Ascending aorta (tissue), 2 donors: ENCODE measurements at regions of chr19 and their contacts with region 1.

Region 1: DNA sequence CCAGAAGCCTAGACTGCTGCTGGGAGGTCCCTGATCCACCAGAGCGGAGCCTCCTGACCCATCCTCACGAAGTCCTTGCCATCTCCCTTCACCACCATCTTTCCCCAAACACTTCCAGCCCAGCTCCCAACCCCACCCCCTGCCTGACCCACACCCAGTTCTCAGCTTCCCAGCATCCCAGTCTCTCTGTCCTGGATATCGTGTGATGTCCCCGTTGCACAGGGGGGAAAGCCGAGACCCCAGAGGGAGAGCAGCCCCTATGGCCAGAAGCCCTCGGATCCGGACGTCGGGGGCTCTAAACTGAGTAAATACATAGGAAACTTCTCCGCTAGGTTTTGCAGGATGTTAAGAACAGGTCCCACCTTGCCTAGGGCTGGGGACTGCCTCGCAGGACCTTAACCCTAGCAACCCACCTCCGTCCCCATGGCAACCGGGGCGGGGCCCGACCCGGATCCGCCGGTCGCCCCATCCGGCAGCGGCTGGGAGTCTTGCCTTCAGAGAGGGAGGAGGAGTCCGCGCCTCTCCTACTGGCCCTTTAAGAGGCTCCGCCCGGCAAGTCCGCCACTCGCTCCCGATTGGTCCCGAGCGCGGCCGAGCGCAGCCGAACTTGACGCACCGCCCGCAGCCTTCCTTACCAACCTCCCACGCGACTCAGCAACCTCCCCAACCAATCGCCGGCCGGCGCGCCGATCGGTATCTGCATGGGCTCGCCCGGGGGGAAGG is 451 bp upstream of the HMG20B start:
- DNase-seq: peak; percentile 100
- H3K4me3 ChIP-seq: peak overlapping the region; percentile 89 to 92
- H3K27ac ChIP-seq: peak overlapping the region; percentile 15 to 38
- H3K4me1 ChIP-seq: peaks cover 8 to 21% of the 10 kb centered on the region in 2 donors
- H3K27me3 ChIP-seq: no peaks in the 10 kb centered on the region
- CTCF ChIP-seq: no peak

Region 2: GRCh38 chr19:3557461-3558248 is 14.6 kb before region 1 on chr19 and contains the start of gene MFSD12:
- intact Hi-C with region 1: loop called (anchors 1 kb)
- DNase-seq: peak; percentile 70 to 96
- H3K4me3 ChIP-seq: peak within 1 kb of the TSS; percentile 63 to 90
- H3K27ac ChIP-seq: peak within 1 kb of the TSS; percentile 72 to 79
- H3K4me1 ChIP-seq: peaks cover 8 to 23% of the 10 kb centered on the region in 2 donors
- H3K27me3 ChIP-seq: no peaks in the 10 kb centered on the region
- CTCF ChIP-seq: no peak
- total RNA-seq, gene MFSD12: 133 TPM

Region 3: DNA sequence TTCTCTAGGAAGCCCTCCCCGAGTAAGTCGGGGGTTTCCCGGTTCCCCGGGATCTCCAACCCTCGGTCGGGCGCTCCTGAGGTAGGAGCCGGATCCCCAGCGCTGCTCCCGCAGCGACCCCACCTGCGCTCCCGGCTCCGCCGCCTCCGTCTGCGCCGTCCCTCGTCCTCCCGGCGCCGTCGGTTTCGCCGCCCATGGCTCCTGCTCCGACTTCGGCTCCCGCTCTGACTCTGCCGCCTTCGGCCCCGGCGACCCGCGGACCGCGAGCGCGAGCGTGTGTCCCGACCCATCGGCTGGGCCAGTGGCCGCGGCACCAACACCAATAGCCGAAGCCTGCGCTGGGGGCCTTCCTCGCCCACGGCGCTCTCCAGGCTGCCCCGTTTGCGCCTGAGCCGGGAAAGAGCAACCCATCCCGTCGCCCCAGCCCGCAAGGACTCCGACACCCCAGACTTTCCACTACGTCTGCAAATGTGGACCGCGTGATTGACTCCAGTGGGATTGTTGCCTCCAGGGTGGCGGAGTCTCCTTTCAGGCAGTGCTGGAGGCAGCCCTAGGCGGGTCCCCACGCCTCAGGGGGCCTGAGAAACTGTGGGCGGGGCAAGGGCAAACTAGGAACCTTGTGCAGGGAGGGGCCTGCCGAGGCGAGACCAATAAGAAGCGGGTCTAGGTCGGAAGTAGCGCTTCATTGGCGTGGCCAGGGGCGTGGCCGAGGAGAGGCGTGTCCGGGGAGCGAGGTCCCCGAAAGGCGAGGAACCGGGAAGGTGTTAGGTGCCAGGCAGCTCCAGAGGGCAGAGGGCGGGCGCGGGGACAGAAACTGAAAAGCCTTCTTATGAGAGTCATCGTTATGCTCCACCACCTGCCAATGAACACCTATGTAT is 54.4 kb after region 1 on chr19 and contains the start of gene CACTIN:
- intact Hi-C with region 1: loop called (anchors 1 kb)
- DNase-seq: peak; percentile 94 to 99
- H3K4me3 ChIP-seq: peak within 1 kb of the TSS; percentile 74 to 94
- H3K27ac ChIP-seq: peak within 1 kb of the TSS; percentile 91 to 93
- H3K4me1 ChIP-seq: peaks cover 10 to 15% of the 10 kb centered on the region in 2 donors
- H3K27me3 ChIP-seq: no peaks in the 10 kb centered on the region
- CTCF ChIP-seq: no peak
- total RNA-seq, gene CACTIN: 57.6 TPM

Region 4: GRCh38 chr19:3762501-3763459 is 190.5 kb after region 1 on chr19 and contains the start of gene MRPL54:
- intact Hi-C with region 1: no loop called
- DNase-seq: peak; percentile 97 to 100
- H3K4me3 ChIP-seq: peak within 1 kb of the TSS; percentile 88 to 95
- H3K27ac ChIP-seq: peak within 1 kb of the TSS; percentile 87 to 98
- H3K4me1 ChIP-seq: peaks cover 9 to 22% of the 10 kb centered on the region in 2 donors
- H3K27me3 ChIP-seq: no peaks in the 10 kb centered on the region
- CTCF ChIP-seq: no peak
- total RNA-seq, gene MRPL54: 34.9 TPM